Posterior cingulate gyrus (tissue), 11 donors: ENCODE measurements at regions of chr2 and their contacts with region 1.

Region 1: GRCh38 chr2:235675678-235676535 is 182.1 kb downstream of the AGAP1 start:
- DNase-seq: no peak

Region 2: GRCh38 chr2:235605312-235606003 is 70.4 kb before region 1 on chr2:
- intact Hi-C with region 1: no loop called
- DNase-seq: peak; percentile 74 to 98 (median 86)

Region 3: GRCh38 chr2:235734688-235735231 is 58.9 kb after region 1 on chr2:
- intact Hi-C with region 1: loop called (anchors 5 kb)
- DNase-seq: peak in 1 of 10 donors; percentile 74

Region 4: GRCh38 chr2:236073246-236073645 is 397.3 kb after region 1 on chr2:
- intact Hi-C with region 1: no loop called
- DNase-seq: no peak